A673 (cell line): ENCODE measurements at regions of chr12 and their contacts with region 1.

Region 1: DNA sequence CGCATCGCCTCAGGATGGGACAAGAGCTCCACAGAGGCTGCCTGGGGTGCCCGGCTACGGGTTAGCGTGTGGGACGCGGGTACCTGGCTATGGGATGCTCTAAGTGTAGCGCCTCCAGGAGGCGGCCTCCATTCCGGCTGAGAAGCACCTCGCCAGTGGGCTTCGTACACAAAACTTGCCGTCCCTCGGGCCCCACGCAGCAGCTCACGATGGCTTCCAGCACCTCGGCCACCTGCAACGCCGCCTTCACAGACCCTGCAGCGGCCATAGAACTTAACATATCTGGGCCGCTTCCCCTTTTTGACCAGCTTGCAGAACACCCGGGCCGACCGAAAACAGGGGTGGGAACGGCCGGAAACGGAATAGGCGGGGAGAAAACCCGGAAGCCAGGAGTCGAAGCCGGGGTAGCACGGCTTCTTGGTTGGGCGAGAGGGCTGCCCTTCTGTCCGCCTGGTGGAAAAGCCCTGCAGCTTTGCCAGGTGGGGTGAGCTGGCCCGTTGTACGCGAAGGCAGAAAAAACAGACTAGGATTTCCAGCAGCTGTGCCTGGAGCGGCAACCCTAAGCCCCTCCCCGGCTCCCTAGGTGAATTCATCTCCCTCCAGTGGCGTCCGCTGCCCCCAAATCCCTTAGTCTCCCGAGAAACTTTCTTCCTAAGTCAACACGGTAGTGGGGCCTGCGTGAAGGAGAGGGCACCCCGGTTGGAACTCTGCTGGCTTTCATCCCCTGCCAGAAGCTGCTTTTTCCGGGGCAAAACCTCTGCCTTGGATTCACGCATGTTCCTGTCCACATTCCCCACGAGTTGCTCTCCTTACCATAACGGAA is at the start of gene BBS10:
- DNase-seq: peak; percentile 95
- H3K4me3 ChIP-seq: peak within 1 kb of the TSS; percentile 94
- H3K27ac ChIP-seq: peak within 1 kb of the TSS; percentile 86
- H3K4me1 ChIP-seq: peaks cover 7% of the 10 kb centered on the region
- H3K27me3 ChIP-seq: no peaks in the 10 kb centered on the region
- CTCF ChIP-seq: peak; percentile 65
- total RNA-seq, gene BBS10: 6.3 and 6.5 TPM in 2 replicates

Region 2: DNA sequence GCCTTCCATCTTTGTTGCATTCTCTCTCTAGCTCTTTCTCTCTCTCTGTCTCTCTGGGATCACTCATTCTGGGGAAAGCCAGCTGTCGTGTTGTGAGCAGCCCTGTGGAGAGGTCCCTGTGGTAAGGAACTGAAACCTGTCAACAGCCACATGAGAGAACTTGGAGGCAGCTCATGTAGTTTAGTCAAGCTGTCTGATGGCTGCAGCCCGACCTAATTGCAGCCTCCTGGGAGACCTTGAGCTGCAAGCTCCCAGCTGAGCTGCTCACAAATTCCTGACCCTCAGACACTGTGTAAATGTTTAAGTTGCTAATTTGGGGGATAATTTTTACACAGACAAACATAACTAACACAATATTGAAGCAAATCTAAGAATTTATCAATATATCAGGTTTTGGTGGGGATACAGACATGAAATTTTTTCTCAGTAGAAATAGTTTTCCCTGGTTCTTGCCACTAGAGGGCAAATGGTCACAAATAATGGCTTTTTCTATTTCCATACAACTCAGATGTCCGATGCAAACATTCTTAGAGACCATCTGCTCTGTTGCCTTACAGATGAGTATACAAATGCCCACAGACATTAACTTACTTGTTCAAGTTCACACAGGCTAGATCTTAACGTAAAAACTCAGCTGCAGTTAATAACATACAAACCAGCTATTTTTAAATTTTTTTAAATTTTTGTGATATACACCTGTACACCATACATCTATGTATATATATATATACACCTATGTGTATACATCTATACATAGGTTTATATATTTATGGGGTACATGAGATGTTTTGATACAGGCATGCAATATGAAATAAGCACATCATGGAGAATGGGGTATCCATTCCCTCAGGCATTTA is 821.4 kb before region 1 on chr12:
- CTCF ChIA-PET with region 1: no interaction called
- POLR2A ChIA-PET with region 1: no interaction called
- intact Hi-C with region 1: loop called (anchors 10 kb)
- DNase-seq: peak; percentile 70
- H3K4me3 ChIP-seq: no peak overlapping the region
- H3K27ac ChIP-seq: no peak overlapping the region
- H3K4me1 ChIP-seq: no peaks in the 10 kb centered on the region
- H3K27me3 ChIP-seq: no peaks in the 10 kb centered on the region
- CTCF ChIP-seq: peak; percentile 67

Region 3: DNA sequence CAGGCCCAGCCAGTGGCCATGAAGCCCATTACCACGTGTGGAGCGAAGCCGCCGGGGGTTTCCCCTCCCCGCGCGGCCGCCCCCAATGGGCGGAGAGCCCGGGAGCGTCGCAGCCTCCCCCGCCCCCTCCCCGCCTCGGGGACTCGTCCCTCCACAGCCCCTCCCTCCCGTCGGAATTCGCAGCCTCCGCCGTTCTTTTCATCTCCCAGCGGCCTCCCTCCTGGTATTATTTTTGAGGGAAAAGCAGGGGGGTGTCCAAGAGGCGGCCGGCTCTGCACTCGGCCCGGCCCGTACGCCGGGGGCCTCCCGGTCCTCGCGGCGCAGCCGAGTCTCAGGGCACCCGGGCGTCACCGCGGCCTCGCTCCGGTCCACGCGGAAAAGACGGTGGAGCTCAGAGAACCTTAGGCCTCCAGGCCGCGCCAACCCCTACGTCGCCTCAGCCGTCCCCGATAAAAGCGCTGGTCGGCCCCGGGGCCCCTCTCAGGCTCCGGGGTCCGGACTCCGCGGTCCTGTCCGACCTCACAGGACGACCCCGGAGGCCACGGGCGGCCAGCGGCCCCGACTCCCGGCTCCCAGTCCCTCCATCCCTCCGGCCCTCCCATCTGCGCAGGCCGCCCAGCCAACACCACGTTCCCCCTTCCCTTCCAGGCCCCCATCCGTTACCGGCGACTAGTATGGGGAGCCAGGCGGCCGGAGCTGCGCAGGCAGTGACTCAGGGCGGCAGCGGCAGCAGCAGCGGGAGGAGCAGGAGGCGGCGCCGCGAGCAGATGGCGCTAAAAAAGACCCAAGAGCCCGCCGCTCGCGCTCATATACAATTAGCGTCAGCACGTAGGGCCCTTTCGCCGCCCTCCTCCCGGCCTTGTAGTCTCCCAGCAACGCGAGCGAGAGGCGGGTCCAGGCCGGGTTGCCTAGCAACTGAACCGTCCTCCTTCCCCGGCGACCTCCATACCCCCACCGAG is 264.1 kb before region 1 on chr12 and contains the start of gene NAP1L1:
- CTCF ChIA-PET with region 1: interaction called, 3 read pairs
- POLR2A ChIA-PET with region 1: no interaction called
- intact Hi-C with region 1: loop called (anchors 10 kb)
- DNase-seq: peak; percentile 99
- H3K4me3 ChIP-seq: peak within 1 kb of the TSS; percentile 95
- H3K27ac ChIP-seq: peak within 1 kb of the TSS; percentile 98
- H3K4me1 ChIP-seq: peaks cover 23% of the 10 kb centered on the region
- H3K27me3 ChIP-seq: no peaks in the 10 kb centered on the region
- CTCF ChIP-seq: no peak
- total RNA-seq, gene NAP1L1: 801 and 837 TPM in 2 replicates

Region 4: GRCh38 chr12:76158518-76159321 is 189.6 kb before region 1 on chr12:
- CTCF ChIA-PET with region 1: no interaction called
- POLR2A ChIA-PET with region 1: no interaction called
- intact Hi-C with region 1: loop called (anchors 10 kb)
- DNase-seq: peak; percentile 33
- H3K4me3 ChIP-seq: no peak overlapping the region
- H3K27ac ChIP-seq: no peak overlapping the region
- H3K4me1 ChIP-seq: no peaks in the 10 kb centered on the region
- H3K27me3 ChIP-seq: no peaks in the 10 kb centered on the region
- CTCF ChIP-seq: peak; percentile 61

Region 5: GRCh38 chr12:76586764-76587395 is 238.6 kb after region 1 on chr12:
- CTCF ChIA-PET with region 1: no interaction called
- POLR2A ChIA-PET with region 1: no interaction called
- intact Hi-C with region 1: loop called (anchors 10 kb)
- DNase-seq: peak; percentile 73
- H3K4me3 ChIP-seq: no peak overlapping the region
- H3K27ac ChIP-seq: no peak overlapping the region
- H3K4me1 ChIP-seq: peaks cover 4% of the 10 kb centered on the region
- H3K27me3 ChIP-seq: no peaks in the 10 kb centered on the region
- CTCF ChIP-seq: peak; percentile 76